Heart left ventricle (tissue), 16 donors: ENCODE measurements at regions of chr7 and their contacts with region 1.

Region 1: GRCh38 chr7:32495298-32496176 is at the start of gene AVL9:
- DNase-seq: peak; percentile 98 to 100 (median 99)
- ATAC-seq: peak; percentile 98 to 100 (median 99)
- H3K4me3 ChIP-seq: peak within 1 kb of the TSS; percentile 71 to 96 (median 92)
- H3K27ac ChIP-seq: peak within 1 kb of the TSS; percentile 85 to 99 (median 96)
- H3K4me1 ChIP-seq: peaks cover 0 to 31% (median 14%) of the 10 kb centered on the region in 12 donors
- H3K27me3 ChIP-seq: no peaks in the 10 kb centered on the region
- CTCF ChIP-seq: no peak
- POLR2A ChIP-seq: peak in 1 of 2 donors; percentile 84
- total RNA-seq, gene AVL9: 7.1 to 22.3 (median 16.7) TPM

Region 2: GRCh38 chr7:32564542-32564941 is 69.0 kb after region 1 on chr7:
- intact Hi-C with region 1: loop called in 1 of 10 experiments (anchors 10 kb)
- DNase-seq: no peak
- ATAC-seq: peak in 3 of 4 donors; percentile 57 to 71 (median 66)
- H3K4me3 ChIP-seq: no peak overlapping the region
- H3K27ac ChIP-seq: peak overlapping the region in 2 of 12 donors; percentile 5 to 18
- H3K4me1 ChIP-seq: peaks cover 0 to 6% (median 0%) of the 10 kb centered on the region in 12 donors
- H3K27me3 ChIP-seq: no peaks in the 10 kb centered on the region
- CTCF ChIP-seq: no peak
- POLR2A ChIP-seq: no peak